ENCODE measurements at regions of chr5 and their contacts with region 1.

Region 1: DNA sequence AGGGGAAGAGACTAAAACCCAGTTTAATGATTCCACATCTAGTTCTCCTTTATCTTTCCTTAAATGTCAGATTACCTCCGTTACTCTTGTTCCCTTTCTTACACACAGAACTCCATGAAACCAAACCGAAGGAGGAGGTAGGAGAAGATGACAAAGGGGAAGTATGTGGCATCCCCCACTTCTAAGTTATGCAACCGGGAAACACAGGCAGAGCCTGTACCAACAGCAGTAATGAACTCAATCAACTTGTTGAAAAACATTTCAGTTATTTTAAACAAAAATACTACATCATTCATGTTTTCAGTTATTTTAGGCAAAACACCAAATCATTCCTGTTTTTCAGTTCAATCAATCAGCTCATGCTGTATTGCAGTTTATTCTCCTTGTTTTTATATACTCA is 101.8 kb downstream of the PCSK1 start:
- DNase-seq: no peak
- ATAC-seq: no peak
- H3K4me3 ChIP-seq: no peak overlapping the region
- H3K27ac ChIP-seq: no peak overlapping the region
- H3K4me1 ChIP-seq: peaks cover 11% of the 10 kb centered on the region; the same call in 1 of the 2 replicates
- H3K27me3 ChIP-seq: no peaks in the 10 kb centered on the region; a peak in 1 of 4 replicates
- CTCF ChIP-seq: no peak
- EP300 ChIP-seq: no peak
- POLR2A ChIP-seq: no peak
- RAD21 ChIP-seq: no peak

Region 2: DNA sequence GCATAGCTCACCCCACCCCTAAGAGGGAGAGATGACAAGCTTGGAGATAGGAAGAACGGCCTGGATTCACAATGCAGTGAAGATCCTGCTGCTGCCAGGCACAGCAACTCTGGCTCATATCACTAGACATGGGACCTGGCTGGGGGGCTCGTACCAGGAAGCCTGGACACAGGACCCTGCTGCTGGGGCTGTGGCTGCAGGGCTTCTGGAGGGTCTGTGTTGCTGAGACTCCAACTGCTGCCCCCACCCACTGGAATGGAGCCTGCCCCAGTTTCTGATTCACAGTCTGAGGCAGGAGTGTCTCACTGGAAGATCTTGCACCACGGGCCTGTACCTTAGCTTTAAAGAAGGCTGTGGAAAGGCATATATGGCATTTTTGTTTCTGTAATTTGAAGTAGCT is 477.7 kb before region 1 on chr5:
- CTCF ChIA-PET with region 1: interaction called, 360 read pairs
- POLR2A ChIA-PET with region 1: no interaction called
- RAD21 ChIA-PET with region 1: interaction called, 182 read pairs
- SMC1A ChIA-PET with region 1: interaction called, 289 read pairs
- in situ Hi-C with region 1: loop called (anchors 5 kb)
- intact Hi-C with region 1: loop called (anchors 1 kb)
- DNase-seq: no peak
- ATAC-seq: no peak
- H3K4me3 ChIP-seq: no peak overlapping the region
- H3K27ac ChIP-seq: no peak overlapping the region
- H3K4me1 ChIP-seq: no peaks in the 10 kb centered on the region
- H3K27me3 ChIP-seq: no peaks in the 10 kb centered on the region
- CTCF ChIP-seq: no peak
- EP300 ChIP-seq: no peak
- POLR2A ChIP-seq: no peak
- RAD21 ChIP-seq: no peak

Region 3: GRCh38 chr5:96318569-96319110 is 12.6 kb before region 1 on chr5:
- CTCF ChIA-PET with region 1: interaction called, 33 read pairs
- POLR2A ChIA-PET with region 1: no interaction called
- RAD21 ChIA-PET with region 1: interaction called, 6 read pairs
- SMC1A ChIA-PET with region 1: interaction called, 11 read pairs
- in situ Hi-C with region 1: no loop called
- intact Hi-C with region 1: no loop called
- DNase-seq: no peak
- ATAC-seq: no peak
- H3K4me3 ChIP-seq: no peak overlapping the region
- H3K27ac ChIP-seq: no peak overlapping the region
- H3K4me1 ChIP-seq: peaks cover 12% of the 10 kb centered on the region
- H3K27me3 ChIP-seq: no peaks in the 10 kb centered on the region
- CTCF ChIP-seq: no peak
- EP300 ChIP-seq: no peak
- POLR2A ChIP-seq: no peak
- RAD21 ChIP-seq: no peak